BJ (cell line): ENCODE measurements at regions of chr17 and their contacts with region 1.

Region 1: DNA sequence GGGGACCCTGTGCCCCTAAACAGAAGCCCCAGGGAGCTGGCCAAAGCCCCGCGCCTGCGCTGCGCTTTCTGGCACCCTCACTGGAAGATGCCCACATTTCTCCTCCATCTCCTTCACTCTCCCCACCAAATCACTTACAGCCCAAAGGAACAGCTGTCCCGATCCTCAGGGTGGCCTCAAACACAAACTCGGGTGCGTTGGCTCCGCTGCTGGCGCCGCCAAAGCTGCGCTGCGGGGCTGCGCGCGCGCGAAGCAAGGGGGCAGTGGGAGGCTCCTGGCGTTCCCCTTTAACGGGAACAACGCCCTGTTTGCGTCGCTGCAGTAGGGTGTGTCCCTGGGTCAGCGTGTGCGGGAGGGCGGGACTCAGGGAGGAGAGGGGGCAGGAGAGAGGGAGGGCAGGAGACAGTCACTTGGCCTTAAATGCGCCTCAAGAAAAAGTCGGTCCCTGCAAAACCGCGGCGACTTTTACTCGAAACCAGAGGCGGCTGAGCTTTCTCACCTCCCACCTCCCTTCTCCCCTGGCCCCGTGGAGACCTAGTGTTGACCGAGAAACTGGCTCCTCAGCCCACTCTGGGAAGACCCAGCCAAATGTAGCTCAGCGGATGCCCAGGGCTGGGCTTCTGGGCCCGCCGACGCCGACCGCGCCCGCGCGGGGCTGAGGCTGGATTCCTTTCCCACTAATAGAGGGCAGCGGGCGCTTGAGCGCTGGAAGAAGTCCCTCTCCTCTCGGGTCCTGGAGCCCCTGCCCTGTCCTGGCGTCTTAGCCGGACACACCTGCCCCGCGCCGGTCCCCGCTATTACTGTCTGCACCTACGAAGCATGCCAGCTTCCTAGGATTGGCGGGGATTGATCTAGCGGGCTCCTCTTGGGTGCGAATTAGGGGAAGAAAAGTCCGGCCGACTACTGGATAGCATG is 2.6 kb downstream of the PMP22 start:
- DNase-seq: peak; percentile 76
- H3K4me3 ChIP-seq: peak overlapping the region; percentile 72
- H3K27me3 ChIP-seq: peaks cover 7% of the 10 kb centered on the region
- CTCF ChIP-seq: peak; percentile 60

Region 2: GRCh38 chr17:15273141-15273793 is 10.7 kb after region 1 on chr17:
- CTCF ChIA-PET with region 1: interaction called, 10 read pairs
- POLR2A ChIA-PET with region 1: no interaction called
- DNase-seq: peak; percentile 96
- H3K4me3 ChIP-seq: no peak overlapping the region
- H3K27me3 ChIP-seq: peaks cover 6% of the 10 kb centered on the region
- CTCF ChIP-seq: no peak

Region 3: GRCh38 chr17:15377616-15378015 is 115.1 kb after region 1 on chr17:
- CTCF ChIA-PET with region 1: interaction called, 14 read pairs
- POLR2A ChIA-PET with region 1: interaction called, 5 read pairs
- DNase-seq: peak; percentile 75
- H3K4me3 ChIP-seq: no peak overlapping the region
- H3K27me3 ChIP-seq: no peaks in the 10 kb centered on the region
- CTCF ChIP-seq: no peak

Region 4: DNA sequence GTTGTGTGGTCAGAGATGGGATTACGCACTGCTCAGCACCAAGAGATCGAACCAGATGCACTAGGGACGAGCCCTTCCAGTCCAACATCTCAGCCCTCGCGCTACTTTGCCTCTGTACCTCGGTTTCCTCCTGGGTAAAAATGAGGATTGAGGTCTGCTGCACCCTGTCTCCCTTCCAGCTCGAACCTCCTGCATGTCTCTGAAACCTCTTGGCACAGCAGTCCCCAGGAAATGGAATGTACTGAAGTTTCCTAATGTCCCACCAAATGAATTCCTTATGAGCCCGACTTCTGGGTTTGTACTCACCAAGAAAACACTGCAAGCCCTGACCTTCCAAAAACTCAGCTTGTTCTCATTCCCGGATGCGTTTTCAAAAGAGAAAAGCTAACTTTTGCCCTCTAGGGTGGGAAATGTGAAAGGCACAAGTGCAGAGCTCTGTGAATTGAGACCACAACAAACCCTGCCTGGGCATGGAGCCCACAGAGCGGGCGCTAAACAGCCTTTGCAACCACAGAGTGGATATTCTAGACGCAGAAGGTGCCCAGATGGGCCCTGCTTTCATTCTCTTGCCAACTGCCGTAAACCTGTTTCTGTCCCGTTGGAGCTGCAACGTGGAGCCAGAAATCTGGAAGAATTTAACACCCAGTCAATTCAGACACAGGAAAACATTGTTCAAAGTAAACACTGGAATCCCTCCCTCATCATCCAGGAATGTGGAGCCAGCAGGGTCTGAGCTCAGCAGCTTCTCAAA is 194.6 kb after region 1 on chr17:
- CTCF ChIA-PET with region 1: interaction called, 11 read pairs
- POLR2A ChIA-PET with region 1: interaction called, 6 read pairs
- DNase-seq: peak; percentile 93
- H3K4me3 ChIP-seq: no peak overlapping the region
- H3K27me3 ChIP-seq: no peaks in the 10 kb centered on the region
- CTCF ChIP-seq: peak; percentile 64